Activated B cell treated with CpG ODN at 0.5 μM for 24 hours (primary cell): ENCODE measurements at regions of chr12 and their contacts with region 1.

Region 1: DNA sequence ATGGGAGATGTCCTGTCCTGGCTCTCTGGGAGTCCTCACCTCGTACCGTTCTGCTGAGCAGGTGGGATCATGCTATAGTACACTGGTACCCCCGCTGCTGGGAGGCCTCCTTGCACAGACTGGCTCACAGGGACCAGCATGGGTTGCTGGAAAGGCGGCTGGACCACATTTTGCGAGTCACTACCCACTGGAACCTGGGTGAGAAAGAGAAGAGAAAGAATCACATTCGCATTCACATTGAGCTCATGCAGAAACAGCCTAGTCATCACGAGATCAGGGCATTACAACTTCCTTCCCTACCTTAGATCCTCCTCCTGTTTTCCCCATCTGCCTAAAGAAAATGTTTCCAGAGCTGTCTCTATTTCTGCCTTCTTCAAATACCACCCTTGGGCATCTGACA is 17.3 kb upstream of the STAC3 start:
- DNase-seq: no peak
- ATAC-seq: no peak
- H3K4me3 Mint-ChIP-seq: no peak overlapping the region
- H3K27ac Mint-ChIP-seq: peak overlapping the region; percentile 52
- H3K4me1 Mint-ChIP-seq: peaks cover 5% of the 10 kb centered on the region
- H3K27me3 Mint-ChIP-seq: no peaks in the 10 kb centered on the region
- CTCF ChIP-seq: no peak

Region 2: GRCh38 chr12:57078519-57079404 is 189.5 kb before region 1 on chr12 and contains the start of gene NEMP1:
- CTCF ChIA-PET with region 1: no interaction called
- POLR2A ChIA-PET with region 1: no interaction called
- intact Hi-C with region 1: no loop called
- DNase-seq: peak; percentile 79
- ATAC-seq: peak; percentile 97
- H3K4me3 Mint-ChIP-seq: peak within 1 kb of the TSS; percentile 96
- H3K27ac Mint-ChIP-seq: peak within 1 kb of the TSS; percentile 93
- H3K4me1 Mint-ChIP-seq: peaks cover 38% of the 10 kb centered on the region
- H3K27me3 Mint-ChIP-seq: no peaks in the 10 kb centered on the region
- CTCF ChIP-seq: no peak
- total RNA-seq, gene NEMP1: 23.0 and 27.6 TPM in 2 replicates

Region 3: DNA sequence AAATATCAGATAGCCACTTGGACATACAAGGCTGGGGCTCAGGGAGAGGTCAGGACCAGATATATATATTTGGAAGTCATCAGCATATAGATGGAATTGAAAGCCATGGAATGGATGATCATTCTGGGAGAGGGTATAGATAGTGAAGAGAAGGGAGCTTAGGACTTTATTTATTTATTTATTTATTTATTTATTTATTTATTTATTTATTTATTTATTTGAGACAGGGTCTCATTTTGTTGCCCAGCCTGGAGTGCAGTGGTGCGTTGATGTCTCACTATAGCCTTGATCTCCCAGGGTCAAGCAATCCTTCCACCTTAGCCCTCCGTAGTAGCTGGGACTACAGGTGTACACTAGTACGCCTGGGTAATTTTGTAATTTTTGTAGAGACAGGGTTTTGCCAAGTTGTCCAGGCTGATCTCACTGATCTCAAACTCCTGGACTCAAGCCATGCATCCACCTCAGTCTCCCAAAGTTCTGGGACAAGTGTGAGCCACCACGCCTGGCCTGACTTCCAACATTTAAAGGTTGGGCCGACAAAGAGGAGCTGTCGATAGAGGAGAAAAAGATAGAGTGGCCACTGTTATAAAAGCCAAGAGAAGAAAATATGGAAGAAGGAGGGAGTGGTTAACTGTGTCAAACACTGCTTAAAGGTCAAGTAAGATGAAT is 178.2 kb after region 1 on chr12:
- CTCF ChIA-PET with region 1: interaction called, 5 read pairs
- POLR2A ChIA-PET with region 1: interaction called, 14 read pairs
- intact Hi-C with region 1: no loop called
- DNase-seq: no peak
- ATAC-seq: no peak
- H3K4me3 Mint-ChIP-seq: no peak overlapping the region
- H3K27ac Mint-ChIP-seq: no peak overlapping the region
- H3K4me1 Mint-ChIP-seq: peaks cover 5% of the 10 kb centered on the region
- H3K27me3 Mint-ChIP-seq: no peaks in the 10 kb centered on the region
- CTCF ChIP-seq: no peak